IMR-90 (cell line): ENCODE measurements at regions of chr15 and their contacts with region 1.

Region 1: DNA sequence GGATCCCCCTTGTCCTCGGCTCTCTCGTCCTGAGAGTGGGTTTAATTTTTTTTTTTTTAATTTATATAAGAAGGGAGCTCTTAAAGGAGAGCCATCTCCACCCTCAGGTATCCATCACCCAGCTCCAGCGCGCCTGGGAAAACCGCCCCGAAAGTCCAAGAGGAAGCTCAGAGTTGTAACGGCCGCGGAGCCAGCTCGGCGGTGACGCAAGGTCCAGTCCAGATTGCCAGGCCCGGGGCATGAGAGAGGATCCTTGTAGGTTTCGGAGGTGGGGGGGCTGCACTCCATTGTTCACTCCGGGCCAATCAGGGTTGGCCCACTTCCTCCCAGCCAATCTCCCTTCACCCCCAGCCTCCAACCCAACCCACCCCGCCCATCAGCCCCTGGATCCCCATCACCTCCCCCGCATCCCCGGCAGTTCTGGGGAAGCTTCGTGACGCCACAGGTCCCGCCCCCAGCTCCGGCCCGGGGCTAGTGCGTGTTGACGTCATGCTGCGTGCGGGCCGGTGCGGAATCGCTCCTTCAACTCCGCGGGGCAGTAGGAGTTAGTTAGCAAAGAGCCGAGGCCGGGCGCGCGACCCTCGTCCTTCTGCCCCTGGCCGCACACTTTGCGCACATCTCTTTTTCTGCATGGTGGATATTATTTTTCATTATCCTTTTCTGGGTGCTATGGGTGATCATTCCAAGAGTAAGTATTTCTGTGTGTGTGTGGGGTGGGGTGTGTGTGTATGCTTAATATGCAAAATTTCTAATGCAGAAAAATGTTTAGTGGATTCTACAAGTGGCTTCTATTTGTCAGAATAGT is at the start of gene ISL2:
- DNase-seq: peak; percentile 96
- ATAC-seq: peak; percentile 94
- H3K4me3 ChIP-seq: peak within 1 kb of the TSS; percentile 68
- H3K27ac ChIP-seq: peak within 1 kb of the TSS; percentile 80
- H3K4me1 ChIP-seq: peaks cover 8% of the 10 kb centered on the region
- H3K27me3 ChIP-seq: peaks cover 22% of the 10 kb centered on the region; the same call in 1 of the 2 replicates
- CTCF ChIP-seq: no peak
- POLR2A ChIP-seq: peak; percentile 89
- RAD21 ChIP-seq: no peak
- total RNA-seq, gene ISL2: 1.1 and 1.3 TPM in 2 replicates

Region 2: GRCh38 chr15:75327005-75327404 is 1009.5 kb before region 1 on chr15:
- CTCF ChIA-PET with region 1: no interaction called
- POLR2A ChIA-PET with region 1: no interaction called
- dilution Hi-C with region 1: no loop called
- in situ Hi-C with region 1: no loop called
- intact Hi-C with region 1: no loop called
- DNase-seq: no peak
- ATAC-seq: no peak
- H3K4me3 ChIP-seq: no peak overlapping the region
- H3K27ac ChIP-seq: no peak overlapping the region
- H3K4me1 ChIP-seq: no peaks in the 10 kb centered on the region
- H3K27me3 ChIP-seq: peaks cover 18% of the 10 kb centered on the region
- CTCF ChIP-seq: no peak
- POLR2A ChIP-seq: no peak
- RAD21 ChIP-seq: no peak

Region 3: GRCh38 chr15:76235186-76235826 is 101.2 kb before region 1 on chr15:
- CTCF ChIA-PET with region 1: no interaction called
- POLR2A ChIA-PET with region 1: no interaction called
- dilution Hi-C with region 1: no loop called
- in situ Hi-C with region 1: no loop called
- intact Hi-C with region 1: loop called (anchors 5 kb)
- DNase-seq: peak; percentile 53
- ATAC-seq: peak; percentile 92
- H3K4me3 ChIP-seq: no peak overlapping the region
- H3K27ac ChIP-seq: no peak overlapping the region
- H3K4me1 ChIP-seq: no peaks in the 10 kb centered on the region; the same call in 1 of the 2 replicates
- H3K27me3 ChIP-seq: no peaks in the 10 kb centered on the region
- CTCF ChIP-seq: peak; percentile 60
- POLR2A ChIP-seq: no peak
- RAD21 ChIP-seq: peak; percentile 62

Region 4: DNA sequence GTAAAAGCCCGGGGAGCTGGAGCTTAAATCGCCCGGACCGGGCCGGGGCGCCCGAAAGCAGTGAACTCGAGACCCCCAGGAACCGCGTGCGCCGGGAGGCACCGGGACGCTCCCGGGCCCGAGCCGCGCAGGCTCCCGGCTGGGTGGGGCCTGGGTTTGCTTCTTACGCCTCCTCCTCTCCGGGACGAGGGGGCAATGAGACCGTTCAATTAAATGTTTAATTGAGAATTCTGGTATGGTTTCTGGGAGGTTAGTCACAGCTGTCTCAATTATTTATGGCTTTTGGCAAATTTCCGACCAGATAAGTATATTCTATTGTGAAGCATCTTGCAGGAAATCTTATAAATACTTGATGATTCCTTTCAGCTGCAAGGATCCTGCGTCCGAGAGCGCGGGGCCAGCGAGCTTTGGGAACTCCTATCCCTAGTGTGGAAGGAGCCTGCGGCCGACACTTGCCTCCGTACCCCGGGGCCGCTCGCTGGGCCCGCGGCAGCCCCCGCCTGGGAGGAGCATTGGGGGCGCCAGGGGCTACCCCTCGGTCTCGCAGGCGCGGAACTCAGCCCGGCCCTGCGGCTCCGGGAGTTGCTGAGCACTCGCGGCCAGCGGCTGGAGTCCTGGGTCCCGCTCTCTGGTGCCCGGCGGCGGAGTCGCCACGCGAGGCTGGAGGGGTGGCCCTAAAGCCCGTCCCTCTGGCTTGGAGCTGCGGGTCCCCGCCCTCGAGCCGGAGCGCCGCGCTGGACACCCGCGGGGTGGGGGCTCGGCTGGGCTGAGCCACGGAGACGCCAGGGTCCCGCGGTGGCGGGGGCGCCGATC is 10.4 kb after region 1 on chr15:
- CTCF ChIA-PET with region 1: no interaction called
- POLR2A ChIA-PET with region 1: no interaction called
- dilution Hi-C with region 1: no loop called
- in situ Hi-C with region 1: no loop called
- intact Hi-C with region 1: no loop called
- DNase-seq: peak; percentile 51
- ATAC-seq: peak; percentile 74
- H3K4me3 ChIP-seq: peak overlapping the region; percentile 32
- H3K27ac ChIP-seq: no peak overlapping the region
- H3K4me1 ChIP-seq: peaks cover 4% of the 10 kb centered on the region
- H3K27me3 ChIP-seq: peaks cover 13% of the 10 kb centered on the region
- CTCF ChIP-seq: no peak
- POLR2A ChIP-seq: no peak
- RAD21 ChIP-seq: no peak

Region 5: DNA sequence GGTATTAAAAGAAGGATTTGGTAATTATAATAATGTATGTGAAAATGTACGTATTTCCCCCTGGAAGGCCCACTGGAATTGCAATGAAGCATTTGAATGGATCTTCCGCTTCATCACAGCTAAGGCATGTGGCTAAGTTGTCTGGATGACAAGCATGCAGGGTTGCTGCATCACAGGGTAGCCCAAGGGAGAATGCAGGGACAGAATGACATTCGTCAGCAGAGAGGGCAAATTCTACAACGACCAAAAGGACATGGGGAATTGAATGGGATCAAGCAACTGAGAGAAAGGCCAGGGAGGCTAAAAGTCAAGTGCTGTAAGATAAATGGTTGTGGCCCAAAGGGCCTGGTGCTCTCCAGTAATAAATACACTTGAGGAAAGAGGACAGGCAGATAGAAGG is 95.5 kb after region 1 on chr15:
- CTCF ChIA-PET with region 1: no interaction called
- POLR2A ChIA-PET with region 1: no interaction called
- dilution Hi-C with region 1: no loop called
- in situ Hi-C with region 1: no loop called
- intact Hi-C with region 1: no loop called
- DNase-seq: peak; percentile 22
- ATAC-seq: no peak
- H3K4me3 ChIP-seq: no peak overlapping the region
- H3K27ac ChIP-seq: no peak overlapping the region
- H3K4me1 ChIP-seq: no peaks in the 10 kb centered on the region; the same call in 1 of the 2 replicates
- H3K27me3 ChIP-seq: no peaks in the 10 kb centered on the region
- CTCF ChIP-seq: no peak
- POLR2A ChIP-seq: no peak
- RAD21 ChIP-seq: no peak

Region 6: GRCh38 chr15:76576523-76577279 is 240.2 kb after region 1 on chr15:
- CTCF ChIA-PET with region 1: no interaction called
- POLR2A ChIA-PET with region 1: no interaction called
- dilution Hi-C with region 1: no loop called
- in situ Hi-C with region 1: no loop called
- intact Hi-C with region 1: loop called (anchors 10 kb)
- DNase-seq: peak; percentile 55
- ATAC-seq: peak; percentile 95
- H3K4me3 ChIP-seq: no peak overlapping the region
- H3K27ac ChIP-seq: no peak overlapping the region
- H3K4me1 ChIP-seq: peaks cover 10% of the 10 kb centered on the region
- H3K27me3 ChIP-seq: no peaks in the 10 kb centered on the region
- CTCF ChIP-seq: no peak
- POLR2A ChIP-seq: no peak
- RAD21 ChIP-seq: no peak

Region 7: GRCh38 chr15:76840830-76841460 is 504.5 kb after region 1 on chr15:
- CTCF ChIA-PET with region 1: no interaction called
- POLR2A ChIA-PET with region 1: no interaction called
- dilution Hi-C with region 1: no loop called
- in situ Hi-C with region 1: no loop called
- intact Hi-C with region 1: loop called (anchors 5 kb)
- DNase-seq: peak; percentile 64
- ATAC-seq: peak; percentile 88
- H3K4me3 ChIP-seq: no peak overlapping the region
- H3K27ac ChIP-seq: no peak overlapping the region
- H3K4me1 ChIP-seq: no peaks in the 10 kb centered on the region
- H3K27me3 ChIP-seq: no peaks in the 10 kb centered on the region
- CTCF ChIP-seq: peak; percentile 69
- POLR2A ChIP-seq: no peak
- RAD21 ChIP-seq: peak; percentile 68